A549 (cell line): ENCODE measurements at regions of chr3 and their contacts with region 1.

Region 1: GRCh38 chr3:56702490-56703315 is 19.6 kb upstream of the TASOR start:
- DNase-seq: peak; percentile 24 to 64
- ATAC-seq: peak; percentile 59 to 83; a peak in 3 of 6 replicates
- H3K4me3 ChIP-seq: no peak overlapping the region
- H3K27ac ChIP-seq: no peak overlapping the region
- H3K4me1 ChIP-seq: no peaks in the 10 kb centered on the region
- CTCF ChIP-seq: peak; percentile 81
- EP300 ChIP-seq: no peak
- POLR2A ChIP-seq: no peak
- RAD21 ChIP-seq: peak; percentile 87 to 89

Region 2: DNA sequence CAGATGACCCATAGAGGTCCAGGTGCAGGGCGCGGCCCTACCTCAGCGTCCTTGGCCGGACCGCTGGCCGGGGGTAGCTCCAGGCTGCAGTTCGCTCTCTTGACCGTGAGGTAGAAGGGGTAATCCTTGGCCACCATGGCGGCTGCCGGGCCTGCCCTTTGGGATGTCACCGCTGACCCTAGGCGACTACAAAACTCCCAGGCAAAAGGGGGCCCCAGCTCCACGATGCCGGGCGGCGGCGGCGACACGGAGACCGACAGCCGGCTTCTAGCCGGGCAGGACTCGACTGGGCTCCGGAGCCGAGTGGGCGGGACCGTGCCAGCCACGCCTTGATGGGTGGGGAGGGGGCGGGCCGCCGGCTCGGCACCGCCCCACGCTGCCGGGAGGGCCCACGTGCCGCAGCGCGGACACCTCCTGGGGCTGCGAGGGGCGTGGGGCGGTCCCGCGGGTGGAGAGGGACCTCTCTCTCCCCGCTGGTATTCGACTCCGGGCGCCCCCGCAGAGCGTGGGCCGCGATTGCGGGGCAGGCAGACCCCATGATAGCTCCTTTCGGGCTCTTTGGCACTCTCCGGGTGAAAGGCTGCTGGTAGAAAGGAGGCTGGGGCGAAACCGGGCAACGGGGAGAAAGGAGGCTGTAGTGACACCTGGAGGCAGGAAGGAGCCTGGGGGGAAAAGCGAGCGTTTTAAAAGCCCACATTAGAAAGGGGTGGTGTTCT is 99.1 kb after region 1 on chr3 and contains the start of gene ARHGEF3:
- CTCF ChIA-PET with region 1: interaction called, 86 read pairs
- POLR2A ChIA-PET with region 1: no interaction called
- DNase-seq: peak; percentile 71 to 75
- ATAC-seq: peak; percentile 98
- H3K4me3 ChIP-seq: peak within 1 kb of the TSS; percentile 64
- H3K27ac ChIP-seq: peak within 1 kb of the TSS; percentile 83 to 91
- H3K4me1 ChIP-seq: no peaks in the 10 kb centered on the region
- CTCF ChIP-seq: peak; percentile 57
- EP300 ChIP-seq: no peak
- POLR2A ChIP-seq: peak; percentile 58
- RAD21 ChIP-seq: peak; percentile 37 to 41; a peak in 3 of 5 replicates
- polyA plus RNA-seq, gene ARHGEF3: 10.6 and 12.1 TPM in 2 replicates

Region 3: GRCh38 chr3:56980798-56981390 is 278.2 kb after region 1 on chr3:
- CTCF ChIA-PET with region 1: interaction called, 7 read pairs
- POLR2A ChIA-PET with region 1: interaction called, 13 read pairs
- DNase-seq: peak; percentile 35 to 72
- ATAC-seq: peak; percentile 93 to 98
- H3K4me3 ChIP-seq: no peak overlapping the region
- H3K27ac ChIP-seq: peak overlapping the region; percentile 27 to 58; a peak in 4 of 6 replicates
- H3K4me1 ChIP-seq: peaks cover 17% of the 10 kb centered on the region
- CTCF ChIP-seq: no peak
- EP300 ChIP-seq: no peak
- POLR2A ChIP-seq: no peak
- RAD21 ChIP-seq: no peak

Region 4: DNA sequence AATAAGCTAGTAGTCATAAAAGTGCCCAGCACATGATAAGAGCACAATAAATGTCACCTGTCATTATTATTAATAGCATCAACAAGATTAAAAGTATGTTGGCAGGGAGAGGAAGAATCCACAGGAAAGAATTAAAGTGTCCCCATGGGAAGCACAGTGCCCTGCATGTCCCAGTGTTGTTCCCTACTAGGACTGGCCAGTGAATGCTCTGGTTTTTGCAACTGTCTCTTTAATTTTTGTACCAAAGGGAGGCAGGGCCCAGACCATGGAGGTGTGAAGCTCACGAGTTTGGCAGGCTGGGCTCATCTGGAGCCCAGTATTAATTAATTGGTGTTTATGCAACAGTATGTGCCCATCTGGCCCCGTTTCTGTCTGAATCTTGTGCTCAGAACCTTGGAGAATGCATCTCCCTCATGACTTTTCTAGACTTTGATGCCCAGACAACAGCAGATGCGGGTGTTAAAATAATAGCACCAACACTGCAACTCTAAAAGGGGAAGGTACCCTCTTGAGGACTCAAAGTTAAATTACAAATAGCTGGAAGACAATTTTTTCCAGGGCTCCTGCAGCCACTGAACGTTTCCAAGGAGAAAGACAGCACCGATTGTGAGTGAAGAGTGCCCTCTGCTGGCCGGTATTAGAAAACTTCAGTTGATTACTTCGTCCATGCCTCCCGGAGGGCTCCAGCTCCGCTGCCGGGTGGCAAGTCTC is 285.9 kb after region 1 on chr3:
- CTCF ChIA-PET with region 1: interaction called, 184 read pairs
- POLR2A ChIA-PET with region 1: interaction called, 5 read pairs
- DNase-seq: peak; percentile 43 to 67
- ATAC-seq: peak; percentile 82 to 92
- H3K4me3 ChIP-seq: no peak overlapping the region
- H3K27ac ChIP-seq: no peak overlapping the region
- H3K4me1 ChIP-seq: peaks cover 21% of the 10 kb centered on the region
- CTCF ChIP-seq: peak; percentile 86
- EP300 ChIP-seq: no peak
- POLR2A ChIP-seq: no peak
- RAD21 ChIP-seq: peak; percentile 85 to 91

Region 5: DNA sequence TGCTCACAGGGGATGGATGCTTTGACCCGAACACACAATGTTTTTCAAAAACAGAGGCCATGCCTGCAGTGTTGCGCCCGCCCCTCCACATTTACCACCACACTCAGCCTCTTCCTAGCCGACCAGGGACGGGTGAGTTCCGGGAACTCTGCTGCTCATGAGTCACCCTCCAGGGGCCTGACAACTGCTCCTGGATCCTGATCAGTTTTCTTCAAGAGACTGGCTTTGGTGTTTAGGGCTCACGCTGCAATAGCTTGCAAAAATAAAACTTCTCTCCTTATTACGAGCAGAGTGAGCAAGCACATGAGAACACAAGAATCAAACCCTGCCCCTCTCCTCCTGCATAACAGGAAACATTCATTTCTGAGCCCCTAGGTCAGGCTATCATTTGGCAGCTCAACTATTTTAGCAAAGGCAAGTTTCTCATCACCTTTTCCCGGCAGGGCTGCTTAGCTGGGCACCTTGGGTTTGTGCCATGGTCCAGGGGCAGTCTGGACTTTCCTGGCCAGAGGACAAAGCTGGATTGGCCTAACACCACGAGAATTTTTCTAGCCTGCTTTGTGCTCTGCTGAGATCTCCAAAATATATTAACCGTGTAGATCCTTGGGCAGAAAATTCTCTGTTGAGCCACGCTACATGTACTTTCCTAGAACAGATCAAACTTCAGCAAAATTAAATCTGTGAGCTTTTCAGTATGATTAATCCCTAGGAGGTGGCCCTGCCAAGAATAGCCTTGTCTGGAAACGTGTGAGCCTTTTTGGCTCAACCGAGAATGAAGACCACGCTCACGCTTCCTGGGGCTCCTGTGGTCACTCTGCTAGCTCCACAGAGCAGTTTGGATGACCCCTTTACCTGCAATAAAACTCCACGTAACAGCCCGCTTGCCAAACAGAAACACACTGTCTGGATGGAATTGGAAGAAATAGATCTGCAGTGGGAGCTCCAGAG is 305.1 kb after region 1 on chr3:
- CTCF ChIA-PET with region 1: interaction called, 10 read pairs
- POLR2A ChIA-PET with region 1: no interaction called
- DNase-seq: peak in 1 of 2 experiments; percentile 21
- ATAC-seq: peak; percentile 80 to 90; a peak in 5 of 6 replicates
- H3K4me3 ChIP-seq: no peak overlapping the region
- H3K27ac ChIP-seq: peak overlapping the region; percentile 39 to 83; a peak in 5 of 6 replicates
- H3K4me1 ChIP-seq: peaks cover 21% of the 10 kb centered on the region
- CTCF ChIP-seq: no peak
- EP300 ChIP-seq: no peak
- POLR2A ChIP-seq: no peak
- RAD21 ChIP-seq: 0 out of 5 replicates have a peak, but pooled peaks of 1 of the 2 experiments have one; percentile 10